Endothelial cell of umbilical vein (primary cell): ENCODE measurements at regions of chr17 and their contacts with region 1.

Region 1: GRCh38 chr17:40355123-40355803 is 9.3 kb downstream of the GJD3 start:
- DNase-seq: peak; percentile 72
- H3K4me3 ChIP-seq: no peak overlapping the region
- H3K27ac ChIP-seq: no peak overlapping the region
- H3K4me1 ChIP-seq: peaks cover 4% of the 10 kb centered on the region
- H3K27me3 ChIP-seq: no peaks in the 10 kb centered on the region
- CTCF ChIP-seq: peak; percentile 95 to 97
- POLR2A ChIP-seq: no peak

Region 2: GRCh38 chr17:40203131-40203530 is 152.1 kb before region 1 on chr17:
- CTCF ChIA-PET with region 1: interaction called, 7 read pairs
- POLR2A ChIA-PET with region 1: no interaction called
- dilution Hi-C with region 1: no loop called
- intact Hi-C with region 1: loop called (anchors 1 kb)
- DNase-seq: peak; percentile 41
- H3K4me3 ChIP-seq: no peak overlapping the region
- H3K27ac ChIP-seq: no peak overlapping the region
- H3K4me1 ChIP-seq: peaks cover 10% of the 10 kb centered on the region
- H3K27me3 ChIP-seq: peaks cover 0 to 2% of the 10 kb centered on the region in 2 experiments
- CTCF ChIP-seq: no peak
- POLR2A ChIP-seq: no peak

Region 3: DNA sequence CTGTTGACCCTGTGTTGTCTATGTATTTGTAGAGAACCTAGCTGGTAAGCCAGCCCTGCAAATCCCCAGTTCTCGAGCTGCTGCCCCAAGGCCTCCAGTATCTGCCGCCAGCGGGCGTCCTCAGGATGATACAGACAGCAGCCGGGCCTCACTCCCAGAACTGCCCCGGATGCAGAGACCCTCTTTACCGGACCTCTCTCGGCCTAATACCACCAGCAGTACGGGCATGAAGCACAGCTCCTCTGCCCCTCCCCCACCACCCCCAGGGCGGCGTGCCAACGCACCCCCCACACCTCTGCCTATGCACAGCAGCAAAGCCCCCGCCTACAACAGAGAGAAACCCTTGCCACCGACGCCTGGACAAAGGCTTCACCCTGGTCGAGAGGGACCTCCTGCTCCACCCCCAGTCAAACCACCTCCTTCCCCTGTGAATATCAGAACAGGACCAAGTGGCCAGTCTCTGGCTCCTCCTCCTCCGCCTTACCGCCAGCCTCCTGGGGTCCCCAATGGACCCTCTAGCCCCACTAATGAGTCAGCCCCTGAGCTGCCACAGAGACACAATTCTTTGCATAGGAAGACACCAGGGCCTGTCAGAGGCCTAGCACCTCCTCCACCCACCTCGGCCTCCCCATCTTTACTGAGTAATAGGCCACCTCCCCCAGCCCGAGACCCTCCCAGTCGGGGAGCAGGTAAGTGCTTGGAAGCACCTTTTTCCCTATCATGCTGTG is 90.6 kb before region 1 on chr17:
- CTCF ChIA-PET with region 1: no interaction called
- POLR2A ChIA-PET with region 1: no interaction called
- dilution Hi-C with region 1: no loop called
- intact Hi-C with region 1: no loop called
- DNase-seq: no peak
- H3K4me3 ChIP-seq: no peak overlapping the region
- H3K27ac ChIP-seq: no peak overlapping the region
- H3K4me1 ChIP-seq: no peaks in the 10 kb centered on the region
- H3K27me3 ChIP-seq: no peaks in the 10 kb centered on the region
- CTCF ChIP-seq: no peak
- POLR2A ChIP-seq: no peak

Region 4: DNA sequence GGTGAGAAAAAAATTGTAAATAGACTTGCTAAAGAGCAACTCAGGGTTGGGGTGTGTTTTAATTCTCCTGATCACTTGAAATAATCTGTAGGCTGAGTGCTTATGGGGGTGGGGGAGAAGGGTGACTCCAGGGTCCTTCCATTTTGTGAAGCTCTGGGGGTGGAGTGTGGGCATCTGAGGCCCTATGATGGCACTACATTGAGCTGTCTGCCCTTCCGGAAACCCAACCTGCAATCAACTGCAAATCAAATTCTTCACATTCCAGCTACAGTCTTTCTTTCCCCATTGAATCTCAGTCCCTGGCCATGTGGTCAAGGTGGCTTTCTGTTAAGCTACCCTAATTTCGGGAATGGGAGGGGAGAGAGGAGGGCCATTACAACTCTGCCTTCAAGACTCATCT is 73.6 kb before region 1 on chr17:
- CTCF ChIA-PET with region 1: no interaction called
- POLR2A ChIA-PET with region 1: no interaction called
- dilution Hi-C with region 1: no loop called
- intact Hi-C with region 1: no loop called
- DNase-seq: no peak
- H3K4me3 ChIP-seq: no peak overlapping the region
- H3K27ac ChIP-seq: no peak overlapping the region
- H3K4me1 ChIP-seq: peaks cover 21% of the 10 kb centered on the region
- H3K27me3 ChIP-seq: no peaks in the 10 kb centered on the region
- CTCF ChIP-seq: no peak
- POLR2A ChIP-seq: no peak

Region 5: GRCh38 chr17:40293363-40293762 is 61.9 kb before region 1 on chr17:
- CTCF ChIA-PET with region 1: interaction called, 530 read pairs
- POLR2A ChIA-PET with region 1: no interaction called
- dilution Hi-C with region 1: no loop called
- intact Hi-C with region 1: no loop called
- DNase-seq: no peak
- H3K4me3 ChIP-seq: no peak overlapping the region
- H3K27ac ChIP-seq: no peak overlapping the region
- H3K4me1 ChIP-seq: peaks cover 11% of the 10 kb centered on the region
- H3K27me3 ChIP-seq: no peaks in the 10 kb centered on the region
- CTCF ChIP-seq: no peak
- POLR2A ChIP-seq: no peak

Region 6: DNA sequence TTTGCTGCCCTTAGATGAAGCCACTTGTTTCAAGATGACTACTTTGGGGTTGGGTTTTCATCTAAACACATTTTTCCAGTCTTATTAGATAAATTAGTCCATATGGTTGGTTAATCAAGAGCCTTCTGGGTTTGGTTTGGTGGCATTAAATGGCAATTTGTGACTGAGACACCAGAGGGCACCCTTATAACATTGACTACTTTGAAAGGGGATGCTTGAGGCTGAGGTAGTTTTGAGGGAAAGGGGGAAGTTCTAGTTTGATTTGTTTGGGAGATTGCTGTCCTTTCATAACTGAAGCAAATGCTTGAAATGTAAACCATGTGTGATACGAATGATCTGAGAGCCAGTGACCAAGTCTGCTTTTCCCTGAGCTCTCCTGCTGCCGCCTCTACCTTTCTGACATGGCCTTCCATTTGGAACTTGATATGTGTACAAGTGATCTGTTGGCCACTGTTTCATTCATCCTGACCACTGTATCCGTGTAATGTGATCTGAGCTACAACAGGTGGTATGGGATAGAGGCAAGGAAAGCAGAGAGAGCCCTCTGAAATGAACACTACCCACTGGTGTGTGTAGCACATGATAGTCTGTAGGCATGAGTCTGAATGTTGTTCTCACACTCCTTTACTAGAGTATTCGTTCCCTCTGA is 52.1 kb before region 1 on chr17:
- CTCF ChIA-PET with region 1: interaction called, 530 read pairs
- POLR2A ChIA-PET with region 1: interaction called, 10 read pairs
- dilution Hi-C with region 1: no loop called
- intact Hi-C with region 1: loop called (anchors 1 kb)
- DNase-seq: peak; percentile 85
- H3K4me3 ChIP-seq: no peak overlapping the region
- H3K27ac ChIP-seq: no peak overlapping the region
- H3K4me1 ChIP-seq: peaks cover 19% of the 10 kb centered on the region
- H3K27me3 ChIP-seq: no peaks in the 10 kb centered on the region
- CTCF ChIP-seq: peak; percentile 55 to 66
- POLR2A ChIP-seq: no peak

Region 7: GRCh38 chr17:40317880-40318829 is 37.1 kb before region 1 on chr17:
- CTCF ChIA-PET with region 1: interaction called, 530 read pairs
- POLR2A ChIA-PET with region 1: no interaction called
- dilution Hi-C with region 1: no loop called
- intact Hi-C with region 1: loop called (anchors 1 kb)
- DNase-seq: peak; percentile 96
- H3K4me3 ChIP-seq: peak overlapping the region; percentile 63 to 66 (median 65)
- H3K27ac ChIP-seq: peak overlapping the region; percentile 83
- H3K4me1 ChIP-seq: peaks cover 72% of the 10 kb centered on the region
- H3K27me3 ChIP-seq: no peaks in the 10 kb centered on the region
- CTCF ChIP-seq: no peak
- POLR2A ChIP-seq: peak; percentile 75

Region 8: GRCh38 chr17:40340880-40341807 is 14.1 kb before region 1 on chr17:
- CTCF ChIA-PET with region 1: interaction called, 28 read pairs
- POLR2A ChIA-PET with region 1: no interaction called
- dilution Hi-C with region 1: no loop called
- intact Hi-C with region 1: no loop called
- DNase-seq: peak; percentile 73
- H3K4me3 ChIP-seq: peak overlapping the region; percentile 65 to 76 (median 69)
- H3K27ac ChIP-seq: peak overlapping the region; percentile 88
- H3K4me1 ChIP-seq: peaks cover 36% of the 10 kb centered on the region
- H3K27me3 ChIP-seq: no peaks in the 10 kb centered on the region
- CTCF ChIP-seq: no peak
- POLR2A ChIP-seq: peak; percentile 53